Spleen (tissue), 13 donors: ENCODE measurements at regions of chr7 and their contacts with region 1.

Region 1: GRCh38 chr7:129664029-129665012 is 52.8 kb downstream of the NRF1 start:
- DNase-seq: no peak
- H3K4me3 ChIP-seq: no peak overlapping the region
- H3K27ac ChIP-seq: no peak overlapping the region
- H3K4me1 ChIP-seq: peaks cover 0 to 20% (median 3%) of the 10 kb centered on the region in 6 donors
- H3K27me3 ChIP-seq: no peaks in the 10 kb centered on the region
- CTCF ChIP-seq: peak in 7 of 11 experiments; percentile 18 to 51 (median 35)
- POLR2A ChIP-seq: no peak

Region 2: GRCh38 chr7:129405527-129405926 is 258.8 kb before region 1 on chr7:
- intact Hi-C with region 1: no loop called
- DNase-seq: no peak
- H3K4me3 ChIP-seq: no peak overlapping the region
- H3K27ac ChIP-seq: no peak overlapping the region
- H3K4me1 ChIP-seq: no peaks in the 10 kb centered on the region
- H3K27me3 ChIP-seq: no peaks in the 10 kb centered on the region
- CTCF ChIP-seq: no peak
- POLR2A ChIP-seq: no peak

Region 3: DNA sequence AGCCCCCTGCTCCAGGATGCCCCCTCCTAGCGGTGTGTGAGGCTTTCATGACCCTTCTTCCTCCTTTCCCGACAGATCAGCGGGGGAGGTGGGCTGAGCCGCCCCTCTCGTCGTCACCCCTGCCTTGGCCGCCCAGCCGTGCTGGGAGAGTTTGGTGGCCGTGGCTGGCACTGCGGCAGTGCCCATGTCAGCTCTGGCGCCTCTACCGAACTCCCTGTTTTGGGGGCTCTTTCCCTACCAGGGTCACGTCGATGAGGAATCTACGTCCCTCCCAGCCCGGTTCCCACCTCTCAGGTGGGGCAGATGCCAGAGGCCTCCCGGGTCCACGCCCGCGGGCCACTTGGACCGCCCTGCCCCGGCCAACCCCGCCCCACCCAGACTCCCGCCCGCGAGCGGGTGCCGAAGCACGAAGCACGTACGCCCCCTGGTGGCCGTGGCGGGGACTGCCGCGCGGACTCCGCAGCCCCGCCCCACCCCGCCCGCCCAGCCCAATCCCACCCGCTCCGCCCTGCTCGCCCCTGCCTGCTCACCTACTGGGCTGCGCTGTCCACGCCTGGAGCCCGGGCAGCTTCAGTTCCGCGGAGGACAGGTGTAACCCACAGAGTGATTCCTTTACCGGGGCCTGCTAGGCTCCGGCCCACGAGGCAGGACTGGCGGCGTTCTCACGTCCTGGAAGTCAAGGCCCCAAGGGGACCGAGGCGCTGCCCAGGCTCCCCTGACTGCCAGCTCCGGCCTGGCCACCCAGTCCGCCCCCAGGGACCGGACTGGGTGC is 161.4 kb after region 1 on chr7:
- intact Hi-C with region 1: loop called (anchors 10 kb)
- DNase-seq: peak; percentile 99
- H3K4me3 ChIP-seq: peak overlapping the region; percentile 60 to 82 (median 72)
- H3K27ac ChIP-seq: peak overlapping the region in 4 of 8 donors; percentile 34 to 83 (median 65)
- H3K4me1 ChIP-seq: peaks cover 8 to 43% (median 32%) of the 10 kb centered on the region in 6 donors
- H3K27me3 ChIP-seq: peaks cover 0 to 6% (median 0%) of the 10 kb centered on the region in 7 donors
- CTCF ChIP-seq: peak in 10 of 11 experiments; percentile 29 to 100 (median 98)
- POLR2A ChIP-seq: no peak